Head of caudate nucleus (tissue), 42 donors: ENCODE measurements at regions of chr12 and their contacts with region 1.

Region 1: DNA sequence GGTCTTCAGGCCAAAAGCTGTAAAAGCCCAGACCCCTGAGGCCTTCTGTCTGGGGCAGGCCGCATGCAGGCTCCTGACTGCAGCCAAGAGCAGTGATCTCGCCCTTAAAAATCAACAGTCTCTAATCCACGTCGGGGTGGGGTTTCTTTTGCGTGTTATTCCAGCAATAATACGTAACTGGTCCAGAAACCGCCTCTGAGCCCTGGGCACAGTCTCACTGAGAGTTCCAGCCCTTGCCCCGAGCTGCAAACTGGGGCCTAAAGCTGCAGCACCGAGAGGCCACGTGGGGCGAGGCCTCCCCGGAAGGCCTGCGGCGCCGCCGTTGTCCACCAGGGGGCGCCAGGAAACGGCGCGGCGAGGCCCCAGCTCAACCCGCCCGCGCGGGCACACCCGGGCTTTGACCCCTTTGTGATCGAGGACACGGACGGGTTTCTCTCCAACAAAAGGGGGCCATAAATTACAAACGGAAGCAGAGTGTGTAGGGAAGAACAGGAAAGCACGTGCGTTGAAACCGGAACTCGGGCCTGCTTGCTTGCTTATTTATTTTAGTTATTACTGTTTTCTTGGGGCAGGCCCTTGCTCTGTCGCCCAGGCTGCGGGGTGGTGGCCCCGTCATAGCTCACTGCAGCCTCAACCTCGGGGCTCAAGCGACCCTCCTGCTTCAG is 87.2 kb downstream of the NINJ2 start:
- DNase-seq: peak; percentile 46 to 92 (median 82)

Region 2: GRCh38 chr12:642633-643474 is 66.8 kb after region 1 on chr12:
- intact Hi-C with region 1: loop called (anchors 2 kb)
- DNase-seq: peak in 40 of 42 donors; percentile 44 to 87 (median 72)

Region 3: GRCh38 chr12:810671-811415 is 234.8 kb after region 1 on chr12:
- intact Hi-C with region 1: loop called (anchors 2 kb)
- DNase-seq: peak in 4 of 42 donors; percentile 12 to 60 (median 36)